CD8-positive, alpha-beta T cell (primary cell): ENCODE measurements at regions of chr2 and their contacts with region 1.

Region 1: DNA sequence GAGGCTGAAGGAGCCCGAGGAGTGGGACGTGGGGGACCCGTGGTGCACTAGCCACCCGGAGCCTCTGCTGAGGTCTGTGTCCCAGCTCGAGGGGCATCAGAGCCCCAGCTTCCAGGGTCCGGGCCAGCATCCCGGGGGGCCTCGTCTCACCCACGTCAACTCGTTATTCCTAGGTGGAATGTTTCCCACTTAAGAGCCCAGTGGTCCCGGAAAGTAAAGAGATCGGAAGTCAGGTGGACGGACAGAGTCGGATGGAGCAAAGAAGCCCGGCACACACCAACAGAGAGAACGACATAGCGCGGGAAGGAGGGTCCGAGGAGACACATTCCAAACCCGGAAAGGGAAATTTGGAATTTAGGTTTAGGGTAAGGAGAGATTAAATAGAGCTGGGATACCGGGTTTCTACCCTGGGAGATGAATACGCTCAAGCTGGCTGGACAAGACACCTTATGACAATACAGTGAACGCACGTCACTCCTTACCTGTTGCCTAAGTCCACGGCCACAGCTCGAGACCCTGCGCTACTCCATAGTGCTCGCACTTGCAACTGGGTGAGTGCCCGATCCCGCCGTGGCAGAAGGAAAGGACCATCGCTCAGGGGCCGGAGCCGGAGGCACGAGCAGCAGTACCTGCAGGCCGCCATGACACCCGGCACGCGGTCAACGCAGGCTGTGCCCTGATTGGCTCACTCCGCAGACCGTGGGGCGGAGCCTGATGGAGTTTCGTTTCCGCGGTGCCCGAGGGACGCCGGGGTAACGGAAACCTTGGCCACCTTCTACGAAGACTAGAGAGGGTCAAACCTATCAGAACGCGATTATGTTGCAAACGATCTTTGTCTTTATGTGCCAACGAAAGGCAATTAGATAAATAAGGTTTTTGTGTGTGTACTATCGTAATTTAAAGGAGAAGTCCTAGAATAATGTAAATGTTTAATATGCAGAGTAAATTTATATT is at the start of gene PNPT1:
- DNase-seq: peak; percentile 84 to 95 (median 92)
- ATAC-seq: peak; percentile 100
- H3K4me3 ChIP-seq: peak within 1 kb of the TSS; percentile 90 to 98
- H3K4me3 Mint-ChIP-seq: peak within 1 kb of the TSS; percentile 98
- H3K27ac ChIP-seq: peak within 1 kb of the TSS; percentile 59 to 66
- H3K27ac Mint-ChIP-seq: peak within 1 kb of the TSS; percentile 93
- H3K4me1 ChIP-seq: peaks cover 12% of the 10 kb centered on the region
- H3K4me1 Mint-ChIP-seq: peaks cover 40% of the 10 kb centered on the region
- H3K27me3 ChIP-seq: no peaks in the 10 kb centered on the region
- H3K27me3 Mint-ChIP-seq: no peaks in the 10 kb centered on the region
- CTCF ChIP-seq: no peak
- total RNA-seq, gene PNPT1: 12.8 to 13.9 TPM

Region 2: DNA sequence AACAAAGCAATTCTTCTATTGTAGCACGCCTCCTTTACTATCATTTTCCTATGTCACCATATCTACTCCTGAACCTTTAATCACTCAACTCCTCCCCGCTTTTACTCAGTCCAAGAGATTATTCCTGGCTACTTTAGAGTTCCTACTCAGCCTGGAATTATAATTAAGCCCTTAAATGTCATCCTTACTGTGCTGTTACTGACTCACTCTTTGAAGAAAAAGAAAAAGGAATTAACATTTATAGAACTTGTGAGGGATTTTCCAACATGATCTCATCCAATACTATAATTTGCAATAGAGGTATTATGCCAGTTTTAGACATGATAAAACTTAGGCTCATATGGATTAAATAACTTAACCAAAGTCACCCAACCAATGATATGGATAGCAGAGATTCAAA is 335.5 kb before region 1 on chr2:
- CTCF ChIA-PET with region 1: no interaction called
- POLR2A ChIA-PET with region 1: no interaction called
- intact Hi-C with region 1: no loop called
- DNase-seq: no peak
- ATAC-seq: no peak
- H3K4me3 ChIP-seq: no peak overlapping the region
- H3K4me3 Mint-ChIP-seq: no peak overlapping the region
- H3K27ac ChIP-seq: no peak overlapping the region
- H3K27ac Mint-ChIP-seq: no peak overlapping the region
- H3K4me1 ChIP-seq: no peaks in the 10 kb centered on the region
- H3K4me1 Mint-ChIP-seq: no peaks in the 10 kb centered on the region
- H3K27me3 ChIP-seq: no peaks in the 10 kb centered on the region
- H3K27me3 Mint-ChIP-seq: no peaks in the 10 kb centered on the region
- CTCF ChIP-seq: no peak

Region 3: DNA sequence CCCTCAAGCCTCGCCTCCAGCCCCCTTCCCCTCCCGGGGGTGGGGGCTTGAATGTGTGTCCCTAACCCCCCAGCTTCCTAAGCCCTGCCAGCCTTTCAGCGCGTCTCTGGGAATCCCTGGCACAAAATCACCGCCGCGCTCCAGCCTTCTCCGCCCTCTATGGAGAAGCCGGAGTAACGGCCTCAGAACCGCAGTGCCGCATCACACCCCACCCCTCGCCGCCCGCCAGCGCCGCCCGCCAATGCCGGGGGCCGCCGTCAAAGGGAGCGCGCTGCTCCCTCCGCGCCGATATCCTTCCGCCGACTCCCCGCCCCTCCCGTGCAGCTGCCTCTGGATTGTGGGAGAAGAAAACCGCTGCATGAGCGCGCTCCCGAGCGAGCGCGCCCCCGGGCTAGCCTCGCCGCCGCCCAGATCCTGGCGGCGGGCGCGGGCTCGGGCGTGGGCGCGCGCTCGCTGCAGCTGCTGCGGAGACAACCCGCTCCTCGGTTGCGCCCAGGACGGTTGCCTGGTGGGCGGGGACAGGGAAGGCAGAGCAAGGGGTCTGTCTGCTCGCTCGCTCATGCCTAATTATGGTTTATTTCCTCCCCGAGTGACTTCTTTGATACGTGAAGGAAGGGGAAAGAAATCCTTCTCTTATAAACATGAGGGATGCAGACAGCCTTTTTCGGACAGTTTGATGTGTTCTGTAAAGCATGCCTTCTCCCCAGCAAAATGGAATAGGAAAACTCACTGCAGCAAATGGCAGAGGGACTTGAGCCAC is 273.6 kb before region 1 on chr2 and contains the start of gene CCDC88A:
- CTCF ChIA-PET with region 1: no interaction called
- POLR2A ChIA-PET with region 1: no interaction called
- intact Hi-C with region 1: loop called in 1 of 2 experiments (anchors 5 kb)
- DNase-seq: peak; percentile 71 to 96 (median 85)
- ATAC-seq: peak; percentile 80
- H3K4me3 ChIP-seq: peak within 1 kb of the TSS; percentile 75 to 93
- H3K4me3 Mint-ChIP-seq: peak within 1 kb of the TSS; percentile 92
- H3K27ac ChIP-seq: peak within 1 kb of the TSS; percentile 57 to 83
- H3K27ac Mint-ChIP-seq: peak within 1 kb of the TSS; percentile 87
- H3K4me1 ChIP-seq: peaks cover 14% of the 10 kb centered on the region
- H3K4me1 Mint-ChIP-seq: peaks cover 38% of the 10 kb centered on the region
- H3K27me3 ChIP-seq: no peaks in the 10 kb centered on the region
- H3K27me3 Mint-ChIP-seq: peaks cover 4% of the 10 kb centered on the region
- CTCF ChIP-seq: no peak
- total RNA-seq, gene CCDC88A: 9.5 to 12.3 TPM